AG04450 (cell line): ENCODE measurements at regions of chr4 and their contacts with region 1.

Region 1: GRCh38 chr4:87555773-87556619 is 26.8 kb upstream of the SPARCL1 start:
- DNase-seq: no peak
- H3K4me3 ChIP-seq: no peak overlapping the region
- H3K27ac ChIP-seq: no peak overlapping the region
- H3K27me3 ChIP-seq: peaks cover 2% of the 10 kb centered on the region
- CTCF ChIP-seq: no peak

Region 2: DNA sequence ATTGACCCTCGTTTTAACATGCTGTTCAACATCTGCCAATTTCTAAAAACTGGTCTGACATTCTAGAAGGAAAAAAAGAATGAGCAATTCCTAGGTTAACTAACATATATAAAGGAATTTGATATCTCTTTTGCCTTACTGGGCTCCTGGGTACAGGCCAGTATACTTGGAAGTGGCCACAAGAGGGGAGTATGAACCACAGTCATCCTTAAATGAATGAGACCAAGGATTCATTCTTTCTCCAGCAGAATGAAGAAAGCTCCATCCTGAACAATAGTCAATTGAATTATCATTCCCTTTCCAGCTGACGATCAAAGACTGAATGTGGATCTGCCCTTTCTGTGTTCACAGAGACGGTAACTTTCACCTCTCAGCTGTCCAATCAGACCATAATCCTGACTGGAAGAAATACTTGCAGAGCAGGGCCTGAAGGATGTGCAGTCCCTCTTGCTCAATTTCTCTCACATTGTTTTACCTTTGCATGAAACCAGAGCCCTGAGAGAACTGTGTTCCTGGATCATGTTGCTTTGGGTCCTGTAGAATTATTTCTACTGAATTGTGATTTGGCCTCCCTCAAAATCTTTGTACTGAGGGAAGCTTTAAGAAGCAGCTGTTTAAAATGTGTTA is 12.0 kb before region 1 on chr4:
- CTCF ChIA-PET with region 1: interaction called, 15 read pairs
- POLR2A ChIA-PET with region 1: no interaction called
- DNase-seq: no peak
- H3K4me3 ChIP-seq: no peak overlapping the region
- H3K27ac ChIP-seq: no peak overlapping the region
- H3K27me3 ChIP-seq: peaks cover 6% of the 10 kb centered on the region
- CTCF ChIP-seq: peak; percentile 67